ENCODE measurements at regions of chr17 and their contacts with region 1.

Region 1: DNA sequence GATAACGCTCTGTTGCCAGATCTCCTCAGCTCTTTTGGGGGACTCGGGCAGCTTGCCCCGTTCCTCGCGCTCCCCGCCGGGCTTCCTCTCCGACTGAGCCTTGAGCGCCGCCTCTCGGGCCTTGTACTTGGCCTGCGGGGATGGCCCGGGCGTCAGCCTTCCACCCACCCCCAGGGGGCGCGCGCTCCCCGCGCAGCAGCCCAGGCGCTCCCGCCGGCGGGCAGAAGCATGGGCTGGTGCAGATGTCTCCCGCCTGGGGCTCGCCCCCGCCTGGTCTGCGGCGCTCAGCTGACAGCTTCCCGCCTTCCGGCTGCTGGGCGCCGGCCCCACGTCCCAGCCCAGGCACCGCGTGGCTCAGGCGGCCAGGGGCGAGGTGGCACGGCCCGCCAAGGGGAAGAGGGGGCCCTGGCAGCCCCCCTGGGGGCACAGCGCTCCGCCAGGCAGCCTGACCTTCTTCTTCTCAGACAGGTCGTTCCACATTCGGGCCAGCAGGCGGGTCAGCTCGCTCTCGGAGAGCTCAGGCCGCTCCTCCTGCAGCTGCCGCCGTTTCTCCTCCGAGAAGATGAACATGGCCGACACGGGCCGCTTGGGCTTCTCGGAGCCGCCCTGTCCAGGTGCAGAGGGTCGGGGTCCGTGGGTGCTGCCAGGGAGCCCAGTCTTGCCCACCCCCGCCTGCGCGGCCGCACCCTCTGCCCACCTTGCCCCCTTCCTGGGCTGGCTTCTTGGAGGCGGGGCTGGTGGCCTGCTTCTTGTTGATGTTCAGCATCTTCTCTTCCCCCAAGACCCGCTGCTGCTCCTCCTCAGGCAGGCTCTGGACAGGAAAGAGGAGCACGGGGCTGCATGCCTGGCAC is 8.9 kb downstream of the UBTF start:
- DNase-seq: peak; percentile 97

Region 2: GRCh38 chr17:43966271-43966670 is 244.3 kb before region 1 on chr17:
- intact Hi-C with region 1: no loop called
- DNase-seq: no peak

Region 3: GRCh38 chr17:44324571-44325275 is 114.2 kb after region 1 on chr17 and contains the start of gene SLC25A39:
- intact Hi-C with region 1: loop called in 1 of 2 experiments (anchors 2 kb)
- DNase-seq: peak; percentile 99
- total RNA-seq, gene SLC25A39: 47.0 to 56.9 TPM

Region 4: DNA sequence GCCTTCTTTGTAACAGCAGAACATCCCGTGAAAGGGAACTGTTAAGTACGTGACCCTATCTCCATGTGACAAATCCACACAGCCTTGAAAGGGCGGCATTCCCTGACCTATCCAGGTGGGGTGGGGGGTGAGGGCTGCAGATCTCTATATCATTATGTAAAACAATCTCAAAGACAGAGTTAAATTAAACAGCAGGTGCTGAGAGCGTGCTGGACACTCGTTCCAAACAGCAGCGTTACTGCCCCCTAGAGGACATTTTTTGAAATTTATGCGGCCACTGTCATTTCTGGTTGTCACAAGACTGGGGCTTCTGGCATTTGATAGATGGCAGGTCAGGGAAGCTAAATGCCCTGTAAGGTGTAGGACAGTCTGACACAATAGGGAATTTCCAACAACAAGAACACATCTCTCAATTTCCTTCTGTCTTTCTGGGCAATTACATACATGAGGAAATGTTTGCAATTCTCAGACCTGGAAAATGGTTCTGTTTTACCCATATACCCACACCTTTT is 120.7 kb after region 1 on chr17:
- intact Hi-C with region 1: loop called in 1 of 2 experiments (anchors 2 kb)
- DNase-seq: no peak